HepG2 (cell line): ENCODE measurements at regions of chr15 and their contacts with region 1.

Region 1: GRCh38 chr15:78909791-78910228 is 35.0 kb downstream of the CTSH start:
- DNase-seq: peak; percentile 42
- ATAC-seq: peak; percentile 73
- H3K4me3 ChIP-seq: no peak overlapping the region
- H3K27ac ChIP-seq: peak overlapping the region; percentile 31
- H3K4me1 ChIP-seq: peaks cover 52% of the 10 kb centered on the region
- H3K27me3 ChIP-seq: no peaks in the 10 kb centered on the region
- CTCF ChIP-seq: peak; percentile 91
- EP300 ChIP-seq: no peak
- POLR2A ChIP-seq: peak in 1 of 2 experiments; percentile 31; a peak in 1 of 4 replicates
- RAD21 ChIP-seq: peak; percentile 81

Region 2: GRCh38 chr15:78811124-78811824 is 98.5 kb before region 1 on chr15 and contains the start of gene ADAMTS7:
- CTCF ChIA-PET with region 1: no interaction called
- POLR2A ChIA-PET with region 1: no interaction called
- in situ Hi-C with region 1: no loop called
- intact Hi-C with region 1: no loop called
- DNase-seq: no peak
- ATAC-seq: peak; percentile 83
- H3K4me3 ChIP-seq: peak within 1 kb of the TSS; percentile 58 to 75 (median 63)
- H3K27ac ChIP-seq: no peak within 1 kb of the TSS
- H3K4me1 ChIP-seq: peaks cover 19% of the 10 kb centered on the region
- H3K27me3 ChIP-seq: peaks cover 12 to 51% of the 10 kb centered on the region in 2 experiments
- CTCF ChIP-seq: peak; percentile 52
- EP300 ChIP-seq: no peak
- POLR2A ChIP-seq: no peak
- RAD21 ChIP-seq: no peak
- total RNA-seq, gene ADAMTS7: 0.09 TPM in 1 of 2 replicates, not detected in the other

Region 3: DNA sequence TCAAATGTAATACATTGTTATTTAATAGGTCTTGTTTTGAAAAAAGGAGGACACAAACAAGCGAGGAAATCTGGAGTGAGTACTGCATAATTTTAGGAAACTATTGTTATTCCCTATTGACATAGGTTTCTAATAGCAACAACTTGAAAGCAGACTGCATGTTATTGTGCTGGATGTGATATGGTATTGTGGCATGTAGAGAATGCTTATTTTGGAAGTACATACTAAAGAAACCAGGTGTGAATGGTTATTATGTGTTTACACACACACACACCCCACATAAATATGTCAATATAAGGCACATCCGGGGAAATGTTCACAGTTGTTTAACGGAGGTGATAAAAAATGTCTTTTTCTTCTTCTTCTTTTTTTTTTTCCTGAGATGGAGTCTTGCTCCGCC is 43.0 kb before region 1 on chr15:
- CTCF ChIA-PET with region 1: no interaction called
- POLR2A ChIA-PET with region 1: no interaction called
- in situ Hi-C with region 1: no loop called
- intact Hi-C with region 1: no loop called
- DNase-seq: no peak
- ATAC-seq: no peak
- H3K4me3 ChIP-seq: no peak overlapping the region
- H3K27ac ChIP-seq: no peak overlapping the region
- H3K4me1 ChIP-seq: peaks cover 20% of the 10 kb centered on the region
- H3K27me3 ChIP-seq: no peaks in the 10 kb centered on the region; a peak in 1 of 5 replicates
- CTCF ChIP-seq: no peak
- EP300 ChIP-seq: no peak
- POLR2A ChIP-seq: no peak
- RAD21 ChIP-seq: no peak

Region 4: GRCh38 chr15:78979456-78980320 is 69.9 kb after region 1 on chr15:
- CTCF ChIA-PET with region 1: interaction called, 15 read pairs
- POLR2A ChIA-PET with region 1: interaction called, 4 read pairs
- in situ Hi-C with region 1: no loop called
- intact Hi-C with region 1: loop called (anchors 1 kb)
- DNase-seq: peak; percentile 85
- ATAC-seq: peak; percentile 75
- H3K4me3 ChIP-seq: no peak overlapping the region
- H3K27ac ChIP-seq: no peak overlapping the region
- H3K4me1 ChIP-seq: peaks cover 49% of the 10 kb centered on the region
- H3K27me3 ChIP-seq: no peaks in the 10 kb centered on the region
- CTCF ChIP-seq: peak; percentile 88
- EP300 ChIP-seq: peak in 1 of 2 experiments; percentile 52; a peak in 1 of 4 replicates
- POLR2A ChIP-seq: no peak
- RAD21 ChIP-seq: peak; percentile 81

Region 5: GRCh38 chr15:79028411-79028964 is 118.7 kb after region 1 on chr15:
- CTCF ChIA-PET with region 1: interaction called, 8 read pairs
- POLR2A ChIA-PET with region 1: no interaction called
- in situ Hi-C with region 1: no loop called
- intact Hi-C with region 1: loop called (anchors 2 kb)
- DNase-seq: peak; percentile 63
- ATAC-seq: peak; percentile 55
- H3K4me3 ChIP-seq: no peak overlapping the region
- H3K27ac ChIP-seq: no peak overlapping the region
- H3K4me1 ChIP-seq: peaks cover 51% of the 10 kb centered on the region
- H3K27me3 ChIP-seq: no peaks in the 10 kb centered on the region
- CTCF ChIP-seq: peak; percentile 89
- EP300 ChIP-seq: no peak
- POLR2A ChIP-seq: no peak
- RAD21 ChIP-seq: peak; percentile 72

Region 6: GRCh38 chr15:79184465-79184892 is 274.7 kb after region 1 on chr15:
- CTCF ChIA-PET with region 1: interaction called, 8 read pairs
- POLR2A ChIA-PET with region 1: interaction called, 3 read pairs
- in situ Hi-C with region 1: loop called (anchors 5 kb)
- intact Hi-C with region 1: loop called (anchors 1 kb)
- DNase-seq: peak; percentile 59
- ATAC-seq: peak; percentile 87
- H3K4me3 ChIP-seq: no peak overlapping the region
- H3K27ac ChIP-seq: no peak overlapping the region
- H3K4me1 ChIP-seq: peaks cover 3% of the 10 kb centered on the region
- H3K27me3 ChIP-seq: peaks cover 1 to 14% of the 10 kb centered on the region in 2 experiments; a peak in 4 of 5 replicates
- CTCF ChIP-seq: peak; percentile 87
- EP300 ChIP-seq: no peak
- POLR2A ChIP-seq: no peak
- RAD21 ChIP-seq: peak; percentile 69

Region 7: DNA sequence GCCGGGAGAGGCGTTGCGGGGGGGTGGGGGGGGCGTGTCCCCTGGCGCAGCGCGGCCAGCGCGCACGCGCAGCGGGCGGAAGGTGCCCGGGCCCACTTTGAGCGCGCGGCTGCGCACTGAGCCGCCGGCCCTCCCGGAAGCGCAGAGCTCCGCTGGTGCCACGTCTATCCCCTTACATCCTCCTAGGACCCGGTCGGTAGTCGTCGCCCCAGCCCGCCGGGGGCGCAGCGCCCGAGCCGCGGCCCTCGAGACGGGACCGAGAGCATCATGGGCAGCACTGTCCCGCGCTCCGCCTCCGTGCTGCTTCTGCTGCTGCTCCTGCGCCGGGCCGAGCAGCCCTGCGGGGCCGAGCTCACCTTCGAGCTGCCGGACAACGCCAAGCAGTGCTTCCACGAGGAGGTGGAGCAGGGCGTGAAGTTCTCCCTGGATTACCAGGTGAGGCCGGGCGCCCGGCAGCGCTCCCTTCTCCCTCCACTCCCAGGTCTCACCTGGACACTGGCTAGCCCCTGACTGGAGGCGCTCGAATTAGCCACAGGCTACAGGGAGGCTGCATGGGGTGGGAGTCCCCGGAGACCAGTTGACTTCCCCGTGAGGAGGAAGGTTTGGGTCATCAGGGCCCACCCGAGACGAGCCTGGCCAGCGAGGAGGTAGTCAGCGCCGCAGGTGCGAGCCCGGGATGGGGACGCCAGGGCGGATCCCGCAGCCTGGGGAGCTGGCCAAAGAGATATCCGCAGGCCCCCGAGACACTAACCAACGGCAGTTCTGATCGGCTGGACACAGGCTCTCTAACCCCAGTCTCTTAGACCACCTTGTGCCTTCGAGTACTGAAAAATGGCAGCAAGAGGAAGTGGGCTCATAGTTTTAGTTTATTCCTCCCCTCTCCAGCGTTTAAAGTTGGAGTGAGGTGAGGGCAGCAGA is 401.4 kb after region 1 on chr15 and contains the start of gene TMED3:
- CTCF ChIA-PET with region 1: no interaction called
- POLR2A ChIA-PET with region 1: no interaction called
- in situ Hi-C with region 1: no loop called
- intact Hi-C with region 1: loop called (anchors 10 kb)
- DNase-seq: peak; percentile 85
- ATAC-seq: peak; percentile 99
- H3K4me3 ChIP-seq: peak within 1 kb of the TSS; percentile 84 to 95 (median 93)
- H3K27ac ChIP-seq: peak within 1 kb of the TSS; percentile 71
- H3K4me1 ChIP-seq: peaks cover 31% of the 10 kb centered on the region
- H3K27me3 ChIP-seq: no peaks in the 10 kb centered on the region; a peak in 2 of 5 replicates
- CTCF ChIP-seq: peak; percentile 74
- EP300 ChIP-seq: no peak
- POLR2A ChIP-seq: peak; percentile 76 to 91
- RAD21 ChIP-seq: no peak
- total RNA-seq, gene TMED3: 76.4 and 125 TPM in 2 replicates